ENCODE measurements at regions of chr4 and their contacts with region 1.

Region 1: GRCh38 chr4:30714408-30715027 is 5.7 kb upstream of the PCDH7 start:
- DNase-seq: peak in 1 of 5 donors; percentile 24
- ATAC-seq: peak in 1 of 4 donors; percentile 19
- H3K4me3 ChIP-seq: no peak overlapping the region
- H3K27ac ChIP-seq: no peak overlapping the region
- H3K4me1 ChIP-seq: peaks cover 0 to 27% (median 8%) of the 10 kb centered on the region in 12 donors
- H3K27me3 ChIP-seq: peaks cover 0 to 23% (median 0%) of the 10 kb centered on the region in 9 donors
- CTCF ChIP-seq: peak; percentile 46 to 69 (median 60)
- POLR2A ChIP-seq: no peak

Region 2: DNA sequence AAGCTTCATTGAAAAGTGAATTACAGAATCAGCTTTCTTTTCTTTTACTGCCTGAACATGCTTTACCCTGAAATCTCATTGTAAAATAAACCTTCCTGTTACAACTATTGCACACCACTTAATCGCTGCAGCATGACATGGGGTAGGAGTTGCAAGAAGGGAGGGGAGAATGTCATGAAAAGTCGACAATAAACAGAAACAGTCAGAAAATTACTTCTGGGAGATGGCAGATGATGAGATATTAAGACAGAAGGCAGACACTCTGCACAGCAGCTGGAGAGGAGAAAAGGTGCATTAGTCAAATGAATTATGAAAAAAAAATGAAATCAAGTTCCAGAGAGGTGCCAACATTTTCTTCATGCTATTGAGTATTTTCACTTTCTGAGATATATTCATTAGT is 293.3 kb after region 1 on chr4:
- intact Hi-C with region 1: no loop called
- DNase-seq: no peak
- ATAC-seq: no peak
- H3K4me3 ChIP-seq: no peak overlapping the region
- H3K27ac ChIP-seq: no peak overlapping the region
- H3K4me1 ChIP-seq: no peaks in the 10 kb centered on the region
- H3K27me3 ChIP-seq: no peaks in the 10 kb centered on the region
- CTCF ChIP-seq: no peak
- POLR2A ChIP-seq: no peak

Region 3: GRCh38 chr4:31360786-31361185 is 646.3 kb after region 1 on chr4:
- intact Hi-C with region 1: loop called in 1 of 10 experiments (anchors 10 kb)
- DNase-seq: no peak
- ATAC-seq: peak in 3 of 4 donors; percentile 31 to 91 (median 44)
- H3K4me3 ChIP-seq: no peak overlapping the region
- H3K27ac ChIP-seq: no peak overlapping the region
- H3K4me1 ChIP-seq: no peaks in the 10 kb centered on the region
- H3K27me3 ChIP-seq: no peaks in the 10 kb centered on the region
- CTCF ChIP-seq: no peak
- POLR2A ChIP-seq: no peak

Region 4: DNA sequence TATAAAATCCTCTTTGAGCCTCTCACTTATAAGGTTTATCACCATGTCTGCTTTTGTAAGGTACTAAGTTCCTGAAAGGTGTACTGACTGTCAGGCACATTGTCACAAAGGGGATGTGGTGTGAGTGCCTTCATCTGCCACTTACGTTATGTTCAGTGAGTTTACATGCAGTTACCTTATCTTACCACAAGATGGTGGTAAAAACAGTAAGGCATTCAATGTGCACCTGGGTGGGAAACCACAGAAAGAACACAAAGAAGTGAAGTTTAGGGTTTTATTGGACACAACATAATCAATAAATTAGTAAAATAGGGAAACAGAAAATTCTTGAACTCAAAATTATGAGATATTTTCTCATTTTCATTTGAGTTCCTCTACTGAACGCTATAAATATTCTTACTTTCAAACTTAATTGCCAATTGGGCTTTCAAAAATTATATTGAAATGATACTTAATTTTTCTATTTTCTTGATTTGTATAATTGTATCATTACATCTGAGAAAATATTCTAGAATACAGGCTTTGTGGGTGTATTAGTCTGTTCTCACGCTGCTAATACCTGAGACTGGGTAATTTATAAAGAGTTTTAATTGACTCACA is 656.4 kb after region 1 on chr4:
- intact Hi-C with region 1: loop called in 3 of 10 experiments (anchors 10 kb)
- DNase-seq: no peak
- ATAC-seq: peak in 1 of 4 donors; percentile 60
- H3K4me3 ChIP-seq: no peak overlapping the region
- H3K27ac ChIP-seq: no peak overlapping the region
- H3K4me1 ChIP-seq: no peaks in the 10 kb centered on the region
- H3K27me3 ChIP-seq: no peaks in the 10 kb centered on the region
- CTCF ChIP-seq: peak; percentile 51 to 79 (median 66)
- POLR2A ChIP-seq: no peak

Measured in heart left ventricle (tissue), 16 donors.